Lower leg skin (tissue), 4 donors: ENCODE measurements at regions of chr18 and their contacts with region 1.

Region 1: GRCh38 chr18:32195881-32196815 is 6.3 kb downstream of the MEP1B start:
- DNase-seq: no peak
- H3K4me3 ChIP-seq: no peak overlapping the region
- CTCF ChIP-seq: no peak
- POLR2A ChIP-seq: no peak

Region 2: GRCh38 chr18:31892936-31893335 is 303.2 kb before region 1 on chr18:
- intact Hi-C with region 1: no loop called
- DNase-seq: no peak
- H3K4me3 ChIP-seq: no peak overlapping the region
- CTCF ChIP-seq: no peak
- POLR2A ChIP-seq: no peak

Region 3: GRCh38 chr18:32010124-32010738 is 185.9 kb before region 1 on chr18:
- intact Hi-C with region 1: no loop called
- DNase-seq: no peak
- H3K4me3 ChIP-seq: no peak overlapping the region
- CTCF ChIP-seq: no peak
- POLR2A ChIP-seq: no peak

Region 4: GRCh38 chr18:32122039-32122438 is 74.1 kb before region 1 on chr18:
- intact Hi-C with region 1: loop called (anchors 5 kb)
- DNase-seq: no peak
- H3K4me3 ChIP-seq: no peak overlapping the region
- CTCF ChIP-seq: no peak
- POLR2A ChIP-seq: no peak

Region 5: GRCh38 chr18:33128581-33128980 is 932.4 kb after region 1 on chr18:
- intact Hi-C with region 1: no loop called
- DNase-seq: no peak
- H3K4me3 ChIP-seq: no peak overlapping the region
- CTCF ChIP-seq: no peak
- POLR2A ChIP-seq: no peak